ENCODE measurements at regions of chr6 and their contacts with region 1.

Region 1: GRCh38 chr6:26537846-26538571 is at the start of gene HMGN4:
- DNase-seq: peak; percentile 90 to 95 (median 91)
- ATAC-seq: peak; percentile 91
- H3K4me3 ChIP-seq: peak within 1 kb of the TSS; percentile 67
- H3K27ac ChIP-seq: peak within 1 kb of the TSS; percentile 86
- H3K4me1 ChIP-seq: peaks cover 14 to 22% of the 10 kb centered on the region in 2 experiments
- H3K27me3 ChIP-seq: no peaks in the 10 kb centered on the region
- CTCF ChIP-seq: peak in 2 of 3 experiments; percentile 25; a peak in 1 of 6 replicates
- EP300 ChIP-seq: peak; percentile 72
- POLR2A ChIP-seq: peak; percentile 88
- RAD21 ChIP-seq: peak in 1 of 2 experiments; percentile 48; a peak in 3 of 4 replicates
- polyA plus RNA-seq, gene HMGN4: 35.4 to 41.1 TPM

Region 2: DNA sequence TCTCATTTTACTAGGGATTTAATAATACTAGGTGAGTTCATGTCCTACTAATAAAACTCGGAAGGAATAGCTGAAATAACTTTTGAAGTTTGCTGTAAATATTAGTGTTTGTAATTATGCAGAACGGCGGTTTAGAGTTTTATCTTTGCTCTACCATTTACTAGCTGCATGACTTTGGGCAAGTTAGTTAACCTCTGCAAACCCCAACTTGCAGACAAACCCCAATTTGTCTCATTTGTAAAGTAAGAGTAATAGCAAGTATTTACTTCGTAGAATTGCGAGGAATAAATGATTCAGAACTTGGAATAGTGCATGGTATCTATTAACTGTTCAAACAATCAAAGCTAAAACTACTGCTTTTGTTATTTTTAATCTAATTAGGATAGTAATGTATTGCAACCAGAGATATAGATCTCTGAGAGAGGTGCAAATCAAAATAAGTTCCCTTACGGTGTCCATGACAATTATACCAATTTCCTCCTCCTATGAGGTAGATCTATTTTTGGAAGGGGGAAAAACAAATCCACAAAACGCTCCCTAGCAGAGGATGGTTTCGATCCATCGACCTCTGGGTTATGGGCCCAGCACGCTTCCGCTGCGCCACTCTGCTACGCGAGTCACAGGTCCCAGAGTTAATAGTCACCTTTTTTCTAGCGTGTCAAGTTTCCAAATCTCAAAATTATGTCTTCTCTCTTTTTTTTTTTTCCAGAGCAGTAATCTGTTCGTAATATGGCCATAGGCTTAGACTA is 208.1 kb before region 1 on chr6:
- CTCF ChIA-PET with region 1: no interaction called
- POLR2A ChIA-PET with region 1: interaction called, 10 read pairs
- in situ Hi-C with region 1: no loop called
- intact Hi-C with region 1: no loop called
- DNase-seq: peak in 3 of 4 experiments; percentile 56 to 88 (median 59)
- ATAC-seq: peak; percentile 40
- H3K4me3 ChIP-seq: peak overlapping the region; percentile 49
- H3K27ac ChIP-seq: peak overlapping the region; percentile 62; the same call in 2 of the 3 replicates
- H3K4me1 ChIP-seq: peaks cover 13 to 28% of the 10 kb centered on the region in 2 experiments; a peak in 4 of 5 replicates
- H3K27me3 ChIP-seq: no peaks in the 10 kb centered on the region
- CTCF ChIP-seq: no peak
- EP300 ChIP-seq: peak; percentile 81
- POLR2A ChIP-seq: no peak
- RAD21 ChIP-seq: 0 out of 4 replicates have a peak, but pooled peaks of 1 of the 2 experiments have one; percentile 4

Region 3: GRCh38 chr6:26342106-26343004 is 195.7 kb before region 1 on chr6:
- CTCF ChIA-PET with region 1: interaction called, 3 read pairs
- POLR2A ChIA-PET with region 1: interaction called, 15 read pairs
- in situ Hi-C with region 1: no loop called
- intact Hi-C with region 1: no loop called
- DNase-seq: no peak
- ATAC-seq: peak; percentile 16
- H3K4me3 ChIP-seq: no peak overlapping the region
- H3K27ac ChIP-seq: no peak overlapping the region; the same call in 2 of the 3 replicates
- H3K4me1 ChIP-seq: peaks cover 11 to 54% of the 10 kb centered on the region in 2 experiments
- H3K27me3 ChIP-seq: no peaks in the 10 kb centered on the region
- CTCF ChIP-seq: no peak; a peak in 1 of 6 replicates
- EP300 ChIP-seq: no peak
- POLR2A ChIP-seq: no peak
- RAD21 ChIP-seq: no peak

Region 4: GRCh38 chr6:26520853-26521599 is 17.0 kb before region 1 on chr6:
- CTCF ChIA-PET with region 1: no interaction called
- POLR2A ChIA-PET with region 1: interaction called, 21 read pairs
- in situ Hi-C with region 1: no loop called
- intact Hi-C with region 1: loop called (anchors 1 kb)
- DNase-seq: peak; percentile 94 to 98 (median 98)
- ATAC-seq: peak; percentile 78
- H3K4me3 ChIP-seq: peak overlapping the region; percentile 70
- H3K27ac ChIP-seq: peak overlapping the region; percentile 98
- H3K4me1 ChIP-seq: peaks cover 13 to 28% of the 10 kb centered on the region in 2 experiments; a peak in 4 of 5 replicates
- H3K27me3 ChIP-seq: no peaks in the 10 kb centered on the region
- CTCF ChIP-seq: peak in 1 of 3 experiments; percentile 8; a peak in 2 of 6 replicates
- EP300 ChIP-seq: peak; percentile 68
- POLR2A ChIP-seq: no peak
- RAD21 ChIP-seq: no peak

Region 5: DNA sequence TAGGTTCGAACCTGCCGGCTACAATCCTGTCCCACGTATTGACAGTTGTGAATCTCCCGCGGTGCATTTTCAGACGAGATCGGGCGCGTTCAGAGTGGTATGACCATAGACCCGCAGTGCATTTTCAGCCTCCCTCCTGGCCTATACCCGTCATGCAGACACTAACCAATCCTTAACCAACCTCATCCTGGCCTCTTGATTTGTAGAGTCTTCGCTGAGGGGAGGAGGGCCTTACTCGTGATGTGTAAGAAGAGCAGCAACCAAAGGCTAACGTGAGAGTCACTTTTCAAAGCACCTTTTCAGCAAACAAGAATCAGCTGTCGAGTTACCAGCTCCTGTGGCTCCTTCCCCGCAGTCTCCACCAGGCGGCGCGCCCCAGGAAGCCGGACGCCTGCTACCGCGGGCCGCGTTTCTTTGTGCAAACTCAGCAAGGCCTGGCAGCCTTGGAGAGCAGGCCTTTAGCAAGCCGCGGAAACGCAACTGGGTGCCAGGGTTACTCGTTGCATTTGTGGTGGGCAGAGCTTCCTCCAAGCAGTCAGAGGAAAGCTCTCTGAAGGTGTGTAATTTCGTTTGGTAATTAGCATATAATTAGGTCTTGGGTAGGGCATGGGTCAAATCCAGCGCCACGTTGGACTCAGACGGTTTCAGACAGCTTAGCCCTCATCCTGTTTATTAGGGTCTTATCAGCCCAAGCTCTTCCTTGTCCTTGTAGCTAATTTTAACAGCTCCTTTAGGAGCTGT is 1234.4 kb after region 1 on chr6:
- CTCF ChIA-PET with region 1: no interaction called
- POLR2A ChIA-PET with region 1: no interaction called
- in situ Hi-C with region 1: no loop called
- intact Hi-C with region 1: no loop called
- DNase-seq: peak; percentile 83 to 95 (median 84)
- ATAC-seq: peak; percentile 92
- H3K4me3 ChIP-seq: no peak overlapping the region
- H3K27ac ChIP-seq: peak overlapping the region; percentile 75
- H3K4me1 ChIP-seq: peaks cover 22 to 40% of the 10 kb centered on the region in 2 experiments
- H3K27me3 ChIP-seq: no peaks in the 10 kb centered on the region
- CTCF ChIP-seq: peak; percentile 97 to 99 (median 97)
- EP300 ChIP-seq: peak; percentile 35
- POLR2A ChIP-seq: no peak
- RAD21 ChIP-seq: peak; percentile 94 to 97